ENCODE measurements at regions of chr14 and their contacts with region 1.

Region 1: DNA sequence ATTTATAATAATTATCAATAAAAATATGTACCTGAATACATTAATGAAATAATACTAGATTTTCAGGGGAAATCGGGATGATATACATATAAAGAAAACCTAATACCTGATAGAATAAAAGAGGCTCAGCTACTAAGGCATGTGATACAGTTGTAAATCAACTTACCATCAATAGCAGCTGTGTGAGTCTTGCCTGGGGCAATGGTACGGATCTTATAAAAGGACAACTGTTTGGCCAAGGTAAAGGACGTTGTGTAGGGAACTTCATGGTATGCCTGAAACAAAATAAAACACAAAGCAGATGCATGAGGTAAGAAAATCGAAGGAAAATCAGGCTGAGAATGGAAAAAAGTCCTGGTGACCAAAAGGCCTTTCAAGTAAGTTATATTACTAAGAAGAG is 25.4 kb downstream of the NEK9 start:
- DNase-seq: no peak
- H3K4me3 ChIP-seq: no peak overlapping the region
- H3K27ac ChIP-seq: no peak overlapping the region
- H3K4me1 ChIP-seq: no peaks in the 10 kb centered on the region
- H3K27me3 ChIP-seq: no peaks in the 10 kb centered on the region
- CTCF ChIP-seq: no peak

Region 2: DNA sequence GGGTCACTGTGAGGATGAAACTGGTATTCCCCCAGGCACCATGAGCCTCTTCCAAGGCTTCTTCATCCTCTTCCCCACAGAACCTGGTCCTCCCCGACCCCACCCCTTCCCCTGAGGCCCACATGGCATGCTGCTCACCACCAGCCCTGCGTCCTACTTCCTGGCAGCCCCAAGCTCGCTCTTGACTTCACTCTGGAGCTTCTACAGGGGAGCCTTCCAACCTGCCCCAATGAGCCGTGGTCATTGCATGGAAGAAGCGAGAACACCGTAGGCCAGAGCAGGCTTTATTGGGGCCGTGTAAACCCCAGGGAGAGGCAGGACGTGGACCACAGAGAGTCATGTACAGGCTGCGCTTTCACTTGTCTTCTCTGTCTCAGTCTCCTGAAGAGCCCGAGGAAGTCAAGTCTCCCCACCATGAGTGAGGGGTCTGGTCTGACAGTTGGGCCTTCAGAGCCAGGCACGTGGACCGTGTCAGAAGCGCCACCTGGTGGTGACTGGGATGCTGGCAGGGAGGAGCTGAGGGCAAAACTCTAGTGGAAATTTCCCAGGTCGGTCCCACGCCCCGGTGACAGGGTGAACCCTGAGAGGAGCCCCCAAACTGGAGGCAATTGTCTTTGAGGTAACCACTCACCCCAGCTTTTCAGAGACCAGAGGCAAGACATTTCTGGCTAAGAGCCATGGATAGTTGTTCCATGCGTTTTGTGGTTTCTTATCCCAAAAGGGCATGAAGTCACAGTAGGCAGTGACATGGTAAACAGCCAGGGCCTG is 195.9 kb before region 1 on chr14:
- CTCF ChIA-PET with region 1: no interaction called
- dilution Hi-C with region 1: loop called (anchors 10 kb)
- in situ Hi-C with region 1: loop called in 1 of 2 experiments (anchors 10 kb)
- intact Hi-C with region 1: no loop called
- DNase-seq: peak; percentile 20
- H3K4me3 ChIP-seq: no peak overlapping the region
- H3K27ac ChIP-seq: no peak overlapping the region
- H3K4me1 ChIP-seq: no peaks in the 10 kb centered on the region
- H3K27me3 ChIP-seq: no peaks in the 10 kb centered on the region
- CTCF ChIP-seq: peak; percentile 88 to 96

Region 3: GRCh38 chr14:75050852-75051554 is 50.5 kb before region 1 on chr14 and contains the start of gene MLH3:
- CTCF ChIA-PET with region 1: no interaction called
- dilution Hi-C with region 1: no loop called
- in situ Hi-C with region 1: no loop called
- intact Hi-C with region 1: no loop called
- DNase-seq: peak; percentile 67
- H3K4me3 ChIP-seq: peak within 1 kb of the TSS; percentile 52 to 54 (median 53)
- H3K27ac ChIP-seq: peak within 1 kb of the TSS; percentile 60
- H3K4me1 ChIP-seq: peaks cover 23% of the 10 kb centered on the region
- H3K27me3 ChIP-seq: no peaks in the 10 kb centered on the region
- CTCF ChIP-seq: no peak
- total RNA-seq, gene MLH3: 11.9 to 15.8 TPM

Region 4: GRCh38 chr14:75132382-75133086 is 31.0 kb after region 1 on chr14:
- CTCF ChIA-PET with region 1: no interaction called
- dilution Hi-C with region 1: no loop called
- in situ Hi-C with region 1: no loop called
- intact Hi-C with region 1: no loop called
- DNase-seq: peak; percentile 71
- H3K4me3 ChIP-seq: no peak overlapping the region
- H3K27ac ChIP-seq: peak overlapping the region; percentile 20
- H3K4me1 ChIP-seq: peaks cover 16% of the 10 kb centered on the region
- H3K27me3 ChIP-seq: no peaks in the 10 kb centered on the region
- CTCF ChIP-seq: peak; percentile 69 to 71

Region 5: DNA sequence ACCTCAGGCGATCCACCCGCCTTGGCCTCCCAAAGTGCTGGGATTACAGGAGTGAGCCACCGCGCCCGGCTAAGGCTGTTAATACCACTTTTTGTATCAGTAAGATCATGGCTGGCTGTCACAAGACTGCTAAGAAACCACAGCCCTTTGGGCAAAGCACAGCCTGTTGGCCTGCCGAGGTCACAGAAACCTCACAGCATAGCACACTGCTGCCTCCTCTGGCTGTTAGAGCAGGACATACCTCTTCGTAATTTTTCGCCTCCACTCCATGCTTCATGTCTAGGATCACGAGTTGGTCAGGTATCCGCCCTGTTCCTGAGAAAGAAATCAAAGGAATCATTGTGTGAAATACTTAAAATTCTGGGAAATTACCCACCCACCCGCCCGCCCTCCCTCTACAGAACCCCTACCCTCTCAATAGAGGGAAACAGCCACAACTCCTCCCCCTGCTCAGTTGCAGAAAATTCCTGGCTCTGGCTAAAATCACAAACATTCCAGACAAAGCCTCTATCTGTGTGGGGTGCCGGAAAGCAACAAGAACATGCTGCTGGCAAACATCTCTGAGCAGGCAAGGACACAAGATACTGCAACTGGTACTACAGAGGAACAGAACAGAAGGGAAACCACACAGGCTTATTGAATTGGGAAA is 46.1 kb after region 1 on chr14:
- CTCF ChIA-PET with region 1: no interaction called
- dilution Hi-C with region 1: no loop called
- in situ Hi-C with region 1: no loop called
- intact Hi-C with region 1: no loop called
- DNase-seq: peak; percentile 95
- H3K4me3 ChIP-seq: no peak overlapping the region
- H3K27ac ChIP-seq: peak overlapping the region; percentile 75
- H3K4me1 ChIP-seq: peaks cover 23% of the 10 kb centered on the region
- H3K27me3 ChIP-seq: no peaks in the 10 kb centered on the region
- CTCF ChIP-seq: peak; percentile 64 to 72